Heart left ventricle (tissue), 16 donors: ENCODE measurements at regions of chr13 and their contacts with region 1.

Region 1: GRCh38 chr13:33110713-33111413 is 94.6 kb downstream of the KL start:
- DNase-seq: peak; percentile 61 to 80 (median 67)
- ATAC-seq: peak in 3 of 4 donors; percentile 42 to 53 (median 47)
- H3K4me3 ChIP-seq: no peak overlapping the region
- H3K27ac ChIP-seq: peak overlapping the region; percentile 29 to 83 (median 60)
- H3K4me1 ChIP-seq: peaks cover 3 to 65% (median 53%) of the 10 kb centered on the region in 12 donors
- H3K27me3 ChIP-seq: no peaks in the 10 kb centered on the region
- CTCF ChIP-seq: no peak
- POLR2A ChIP-seq: no peak

Region 2: DNA sequence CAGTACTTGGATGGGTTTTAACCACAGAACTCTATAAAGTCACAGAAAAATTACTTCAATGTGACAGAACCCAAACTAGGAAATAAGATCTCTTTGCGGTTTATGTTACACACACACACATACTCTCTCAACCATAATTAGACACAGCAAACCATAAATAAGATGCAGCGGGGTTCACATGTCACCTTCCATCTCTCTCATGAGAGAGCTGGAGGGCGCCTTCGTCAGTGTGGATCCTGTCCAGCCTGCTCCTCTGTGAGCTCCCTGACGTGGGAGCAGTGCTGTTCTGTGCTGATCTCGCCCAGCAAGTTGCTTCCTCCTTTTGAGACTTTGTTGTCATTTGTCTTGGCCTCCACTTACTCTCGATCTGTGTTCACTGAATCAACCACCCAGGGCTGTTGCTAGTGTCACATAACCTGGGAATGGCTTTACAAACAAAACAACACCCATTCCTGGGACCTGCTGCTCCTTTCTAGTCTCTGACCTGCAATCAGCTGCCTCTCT is 299.5 kb before region 1 on chr13:
- intact Hi-C with region 1: no loop called
- DNase-seq: no peak
- ATAC-seq: no peak
- H3K4me3 ChIP-seq: no peak overlapping the region
- H3K27ac ChIP-seq: no peak overlapping the region
- H3K4me1 ChIP-seq: no peaks in the 10 kb centered on the region
- H3K27me3 ChIP-seq: no peaks in the 10 kb centered on the region
- CTCF ChIP-seq: no peak
- POLR2A ChIP-seq: no peak

Region 3: DNA sequence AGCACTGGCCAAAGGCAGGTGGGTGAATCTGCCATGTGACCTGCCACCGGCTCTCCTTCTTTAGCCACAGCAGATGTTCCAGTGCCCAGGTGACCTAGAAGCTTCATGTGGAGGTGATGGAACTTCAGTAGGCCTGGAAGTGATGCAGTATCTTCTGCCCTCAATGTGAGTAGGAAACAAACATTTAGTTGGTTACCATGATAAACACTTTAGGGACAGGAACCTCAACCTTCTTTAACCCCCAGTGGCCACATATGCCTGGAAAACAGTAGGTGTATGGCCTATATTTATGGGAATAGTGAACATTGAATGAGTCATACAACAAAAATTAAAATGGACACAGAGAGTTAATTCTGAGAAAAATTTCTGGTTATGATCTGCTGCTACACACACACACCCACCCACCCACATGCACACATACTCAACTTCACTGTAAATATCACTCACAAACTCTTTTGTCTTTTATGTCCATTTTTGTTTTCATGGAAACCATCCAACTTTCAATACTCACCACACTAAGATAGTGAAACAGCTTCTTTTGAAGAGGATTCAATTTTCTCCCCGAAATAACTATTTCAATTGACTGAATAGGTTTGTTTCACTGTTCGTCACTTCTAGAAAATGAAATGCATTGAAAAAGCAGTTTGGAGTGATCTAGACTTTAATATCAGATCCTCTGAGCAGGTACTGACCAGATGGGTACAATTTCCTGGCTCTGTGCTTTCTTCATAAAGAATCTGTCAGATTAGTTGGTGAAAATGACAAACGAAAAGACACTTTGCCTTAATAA is 77.4 kb after region 1 on chr13:
- intact Hi-C with region 1: loop called in 1 of 10 experiments (anchors 5 kb)
- DNase-seq: no peak
- ATAC-seq: no peak
- H3K4me3 ChIP-seq: no peak overlapping the region
- H3K27ac ChIP-seq: peak overlapping the region in 9 of 12 donors; percentile 25 to 77 (median 41)
- H3K4me1 ChIP-seq: peaks cover 3 to 91% (median 68%) of the 10 kb centered on the region in 12 donors
- H3K27me3 ChIP-seq: no peaks in the 10 kb centered on the region
- CTCF ChIP-seq: no peak
- POLR2A ChIP-seq: no peak

Region 4: DNA sequence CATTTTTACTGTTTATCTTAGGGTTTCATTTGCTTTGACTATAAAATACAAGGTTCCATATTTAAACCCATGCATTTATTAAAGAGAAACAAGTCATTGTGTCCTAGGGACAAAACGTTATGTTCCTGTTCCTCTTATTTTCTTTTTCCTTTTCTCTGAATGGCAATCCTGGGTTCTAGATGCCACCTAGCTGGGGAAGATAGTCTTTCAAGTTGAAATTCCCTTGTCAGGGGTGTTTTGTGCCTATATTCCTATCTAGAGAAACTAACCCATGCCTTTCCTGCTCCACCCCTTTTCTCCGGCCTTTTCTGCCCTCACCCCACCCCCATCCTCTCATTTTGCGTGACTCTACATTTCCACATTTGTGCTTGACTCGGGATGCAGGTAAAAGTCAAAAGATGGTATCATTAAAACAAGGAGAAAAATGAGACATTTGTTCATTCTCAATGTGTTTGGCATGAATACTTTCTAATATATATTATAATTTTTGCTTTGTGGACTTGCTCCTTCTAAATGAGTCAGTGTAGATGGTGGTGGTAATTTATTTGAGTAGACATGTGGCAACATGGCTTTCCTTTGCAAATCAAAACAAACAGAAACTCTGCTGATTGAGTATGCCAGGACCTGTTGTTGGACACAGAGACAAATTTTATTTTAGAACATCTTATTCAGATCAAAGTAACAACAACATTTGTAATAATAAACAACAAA is 201.4 kb after region 1 on chr13:
- intact Hi-C with region 1: loop called in 1 of 10 experiments (anchors 10 kb)
- DNase-seq: no peak
- ATAC-seq: peak in 3 of 4 donors; percentile 39 to 51 (median 42)
- H3K4me3 ChIP-seq: no peak overlapping the region
- H3K27ac ChIP-seq: peak overlapping the region in 1 of 12 donors; percentile 26
- H3K4me1 ChIP-seq: peaks cover 0 to 34% (median 4%) of the 10 kb centered on the region in 12 donors
- H3K27me3 ChIP-seq: no peaks in the 10 kb centered on the region
- CTCF ChIP-seq: peak in 11 of 12 donors; percentile 19 to 58 (median 42)
- POLR2A ChIP-seq: no peak

Region 5: GRCh38 chr13:33537026-33537425 is 426.2 kb after region 1 on chr13:
- intact Hi-C with region 1: loop called in 2 of 10 experiments (anchors 10 kb)
- DNase-seq: no peak
- ATAC-seq: no peak
- H3K4me3 ChIP-seq: peak overlapping the region in 1 of 12 donors; percentile 17
- H3K27ac ChIP-seq: peak overlapping the region in 4 of 12 donors; percentile 4 to 97 (median 26)
- H3K4me1 ChIP-seq: peaks cover 0 to 37% (median 14%) of the 10 kb centered on the region in 12 donors
- H3K27me3 ChIP-seq: no peaks in the 10 kb centered on the region
- CTCF ChIP-seq: no peak
- POLR2A ChIP-seq: no peak